CD14-positive monocyte (primary cell): ENCODE measurements at regions of chr2 and their contacts with region 1.

Region 1: DNA sequence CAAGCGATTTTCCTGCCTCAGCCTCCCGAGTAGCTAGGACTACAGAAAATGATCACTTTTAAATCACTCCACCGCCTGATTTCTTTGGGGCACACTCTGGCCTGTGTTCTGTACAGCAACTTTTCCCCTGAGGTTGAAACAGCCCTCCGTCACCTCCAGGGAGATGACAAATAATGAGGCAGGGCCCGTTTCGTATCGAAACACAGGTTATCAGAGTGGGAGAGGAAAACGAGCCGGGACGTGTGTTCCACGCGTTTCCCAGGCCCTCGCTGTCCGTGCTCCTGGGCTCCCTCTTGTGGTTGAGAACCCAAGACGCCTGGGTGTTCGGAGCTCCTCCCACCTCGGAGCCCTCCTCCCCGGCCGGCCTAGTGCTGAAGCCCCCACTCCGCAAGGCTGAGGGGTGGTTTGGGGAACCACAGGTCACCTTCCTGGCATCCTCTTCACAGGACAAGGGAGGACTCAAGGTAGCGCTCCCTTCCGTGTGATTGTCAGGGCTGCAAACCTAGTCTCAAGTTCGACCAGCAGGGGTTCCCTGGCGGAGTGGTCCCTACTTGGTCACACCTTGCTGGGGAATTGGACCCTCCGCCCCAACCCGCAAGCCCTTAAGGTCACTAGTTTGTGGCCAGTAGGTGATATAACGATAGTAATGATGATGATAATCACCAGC is 12.8 kb downstream of the ATP6V1B1 start:
- DNase-seq: peak; percentile 50 to 65 (median 58)
- H3K4me3 ChIP-seq: peak overlapping the region in 1 of 3 experiments; percentile 56
- H3K4me3 Mint-ChIP-seq: peak overlapping the region; percentile 75 to 96
- H3K27ac ChIP-seq: no peak overlapping the region
- H3K27ac Mint-ChIP-seq: peak overlapping the region in 2 of 7 donors; percentile 38 to 79
- H3K4me1 ChIP-seq: peaks cover 8 to 9% of the 10 kb centered on the region in 2 donors
- H3K4me1 Mint-ChIP-seq: peaks cover 12% of the 10 kb centered on the region
- H3K27me3 ChIP-seq: peaks cover 12 to 35% of the 10 kb centered on the region in 2 donors
- H3K27me3 Mint-ChIP-seq: peaks cover 48 to 59% (median 50%) of the 10 kb centered on the region in 3 donors
- CTCF ChIP-seq: peak; percentile 88

Region 2: GRCh38 chr2:70698847-70699246 is 249.6 kb before region 1 on chr2:
- intact Hi-C with region 1: no loop called
- DNase-seq: no peak
- H3K4me3 ChIP-seq: no peak overlapping the region
- H3K4me3 Mint-ChIP-seq: no peak overlapping the region
- H3K27ac ChIP-seq: no peak overlapping the region
- H3K27ac Mint-ChIP-seq: no peak overlapping the region
- H3K4me1 ChIP-seq: no peaks in the 10 kb centered on the region
- H3K4me1 Mint-ChIP-seq: no peaks in the 10 kb centered on the region
- H3K27me3 ChIP-seq: no peaks in the 10 kb centered on the region
- H3K27me3 Mint-ChIP-seq: peaks cover 7 to 9% (median 8%) of the 10 kb centered on the region in 3 donors
- CTCF ChIP-seq: no peak

Region 3: DNA sequence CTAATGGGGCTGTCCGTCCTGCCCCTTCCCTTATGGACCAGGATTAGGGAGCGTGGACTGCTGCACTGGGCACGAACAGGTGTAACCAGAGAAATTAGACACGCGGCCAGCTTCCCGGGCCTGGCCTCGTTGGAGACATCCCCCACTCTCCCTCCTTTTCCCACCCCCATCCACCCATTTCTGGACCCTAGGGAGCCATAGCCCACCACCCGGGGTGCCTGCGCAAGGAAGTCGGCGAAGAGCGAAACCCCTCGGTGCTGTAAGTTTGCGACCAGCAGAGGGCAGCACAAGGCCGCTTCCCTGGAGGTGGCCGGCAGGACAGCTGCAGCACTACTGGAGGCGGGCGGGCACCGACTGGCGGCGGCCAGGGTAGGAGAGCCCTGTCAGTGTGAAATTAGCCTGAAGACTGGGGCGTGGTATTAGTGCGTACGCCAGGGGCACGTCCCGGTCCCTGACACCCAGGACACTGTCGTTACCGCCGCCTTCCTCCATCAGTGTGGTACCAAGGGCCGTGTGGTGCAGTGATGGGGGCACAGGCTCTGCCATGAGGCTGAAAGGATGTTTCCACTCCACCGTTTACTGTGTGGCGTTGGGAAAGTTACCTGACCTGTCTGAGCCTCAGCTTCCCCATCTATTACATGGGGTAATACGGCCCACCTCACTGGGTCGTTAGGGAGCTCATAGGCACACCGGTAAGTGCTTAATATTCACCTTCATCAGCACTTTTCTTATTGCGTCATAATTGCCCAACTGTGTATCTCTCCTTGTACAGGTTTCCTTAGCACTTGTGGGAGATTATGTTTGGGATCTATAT is 76.9 kb before region 1 on chr2:
- intact Hi-C with region 1: loop called in 1 of 2 experiments (anchors 5 kb)
- DNase-seq: peak; percentile 80 to 82 (median 81)
- H3K4me3 ChIP-seq: peak overlapping the region in 1 of 3 experiments; percentile 41
- H3K4me3 Mint-ChIP-seq: peak overlapping the region in 1 of 2 donors; percentile 74
- H3K27ac ChIP-seq: no peak overlapping the region
- H3K27ac Mint-ChIP-seq: no peak overlapping the region
- H3K4me1 ChIP-seq: peaks cover 0 to 9% of the 10 kb centered on the region in 2 donors
- H3K4me1 Mint-ChIP-seq: peaks cover 4% of the 10 kb centered on the region
- H3K27me3 ChIP-seq: peaks cover 12 to 54% of the 10 kb centered on the region in 2 donors
- H3K27me3 Mint-ChIP-seq: peaks cover 41 to 67% (median 66%) of the 10 kb centered on the region in 3 donors
- CTCF ChIP-seq: peak; percentile 90

Region 4: DNA sequence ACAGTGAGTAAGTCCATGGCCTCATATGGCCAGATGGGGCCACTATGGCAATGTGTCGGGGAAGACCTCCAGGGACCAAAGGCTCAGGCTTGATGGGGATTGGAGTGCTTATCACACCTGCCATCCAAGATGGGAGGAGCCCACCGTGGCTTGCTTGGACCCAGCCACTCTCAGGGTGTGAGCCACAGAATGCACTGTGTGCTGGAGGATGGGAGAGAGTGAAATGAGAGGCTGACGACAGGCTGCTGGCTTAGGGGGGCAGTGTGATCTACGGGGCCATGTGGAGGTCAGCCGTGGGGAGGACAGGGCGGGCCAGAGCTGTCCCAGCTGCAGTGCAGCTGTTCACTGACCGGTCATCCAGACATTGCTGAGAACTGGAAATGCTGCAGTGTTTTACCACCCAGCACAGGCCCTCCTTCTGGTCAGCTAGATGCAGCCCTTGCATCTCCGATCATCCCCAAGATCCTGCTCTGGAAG is 859.5 kb after region 1 on chr2:
- intact Hi-C with region 1: no loop called
- DNase-seq: no peak
- H3K4me3 ChIP-seq: no peak overlapping the region
- H3K4me3 Mint-ChIP-seq: no peak overlapping the region
- H3K27ac ChIP-seq: no peak overlapping the region
- H3K27ac Mint-ChIP-seq: no peak overlapping the region
- H3K4me1 ChIP-seq: no peaks in the 10 kb centered on the region
- H3K4me1 Mint-ChIP-seq: no peaks in the 10 kb centered on the region
- H3K27me3 ChIP-seq: no peaks in the 10 kb centered on the region
- H3K27me3 Mint-ChIP-seq: peaks cover 0 to 3% (median 2%) of the 10 kb centered on the region in 3 donors
- CTCF ChIP-seq: no peak